Endothelial cell of umbilical vein (primary cell): ENCODE measurements at regions of chr3 and their contacts with region 1.

Region 1: DNA sequence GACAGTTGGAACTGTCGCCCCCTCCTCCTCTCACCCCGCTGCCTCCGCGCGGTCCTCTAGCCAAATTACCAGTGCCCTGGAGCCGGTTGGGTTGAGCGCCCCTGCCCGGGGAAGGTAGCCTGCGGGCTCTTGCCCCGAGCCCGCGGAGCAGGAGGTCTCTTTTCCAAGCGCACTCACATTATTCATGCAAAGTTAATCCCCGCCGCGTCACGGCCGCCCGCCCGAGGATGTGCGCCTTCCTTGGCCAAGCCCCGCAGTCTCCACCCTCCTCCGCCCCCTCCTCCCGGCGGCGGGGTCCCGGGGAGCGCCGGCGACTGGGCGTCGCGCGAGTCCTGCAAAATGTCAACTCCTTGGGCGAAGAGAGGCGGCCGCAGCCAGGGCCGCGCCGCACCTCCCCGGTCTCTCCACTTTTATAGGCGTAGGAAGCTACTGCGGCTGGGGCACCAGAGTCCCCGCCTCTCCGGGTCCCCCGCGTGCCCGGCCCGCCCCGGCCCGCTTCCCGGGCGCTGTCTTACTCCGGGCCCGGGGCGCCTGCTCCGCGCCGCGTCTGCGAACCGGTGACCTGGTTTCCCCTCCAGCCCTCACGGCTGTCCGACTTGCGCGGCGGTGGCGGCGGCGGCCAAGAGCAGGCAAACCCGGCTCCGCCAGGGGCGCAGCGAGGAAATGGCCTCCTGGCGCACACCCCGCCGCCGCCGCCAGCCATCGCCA is at the start of gene THRB:
- DNase-seq: peak; percentile 48
- H3K4me3 ChIP-seq: peak within 1 kb of the TSS; percentile 37 to 67 (median 56)
- H3K27ac ChIP-seq: no peak within 1 kb of the TSS
- H3K4me1 ChIP-seq: peaks cover 12% of the 10 kb centered on the region
- H3K27me3 ChIP-seq: peaks cover 25 to 32% of the 10 kb centered on the region in 2 experiments
- CTCF ChIP-seq: peak in 1 of 2 donors; percentile 26
- POLR2A ChIP-seq: no peak
- total RNA-seq, gene THRB: 0.18 TPM in 1 of 2 replicates, not detected in the other

Region 2: DNA sequence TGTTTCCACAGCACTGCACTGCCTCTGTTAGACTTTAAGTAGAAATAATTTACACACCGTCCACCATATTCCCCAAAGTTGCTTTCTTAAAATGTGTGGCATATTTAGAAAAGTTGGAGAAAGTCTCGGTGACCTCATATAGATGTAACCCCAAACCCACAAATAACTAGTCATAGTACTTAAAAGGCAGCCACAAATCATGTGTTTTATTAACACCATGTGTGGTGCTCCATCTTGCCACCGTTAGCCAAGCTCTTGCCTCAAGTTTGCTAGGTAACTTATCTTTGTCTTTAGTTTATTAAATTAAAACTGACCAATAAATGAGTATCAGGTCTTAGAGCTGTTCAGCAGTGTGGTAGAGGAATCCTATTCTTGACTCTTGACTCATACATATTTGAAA is 1033.7 kb before region 1 on chr3:
- CTCF ChIA-PET with region 1: no interaction called
- POLR2A ChIA-PET with region 1: no interaction called
- dilution Hi-C with region 1: no loop called
- intact Hi-C with region 1: no loop called
- DNase-seq: no peak
- H3K4me3 ChIP-seq: no peak overlapping the region
- H3K27ac ChIP-seq: no peak overlapping the region
- H3K4me1 ChIP-seq: no peaks in the 10 kb centered on the region
- H3K27me3 ChIP-seq: no peaks in the 10 kb centered on the region
- CTCF ChIP-seq: no peak
- POLR2A ChIP-seq: no peak

Region 3: GRCh38 chr3:23999012-23999641 is 495.6 kb before region 1 on chr3:
- CTCF ChIA-PET with region 1: interaction called, 3 read pairs
- POLR2A ChIA-PET with region 1: no interaction called
- dilution Hi-C with region 1: no loop called
- intact Hi-C with region 1: loop called (anchors 1 kb)
- DNase-seq: peak; percentile 79
- H3K4me3 ChIP-seq: no peak overlapping the region
- H3K27ac ChIP-seq: no peak overlapping the region
- H3K4me1 ChIP-seq: peaks cover 3% of the 10 kb centered on the region
- H3K27me3 ChIP-seq: peaks cover 4 to 8% of the 10 kb centered on the region in 2 experiments
- CTCF ChIP-seq: peak; percentile 67 to 87
- POLR2A ChIP-seq: no peak

Region 4: DNA sequence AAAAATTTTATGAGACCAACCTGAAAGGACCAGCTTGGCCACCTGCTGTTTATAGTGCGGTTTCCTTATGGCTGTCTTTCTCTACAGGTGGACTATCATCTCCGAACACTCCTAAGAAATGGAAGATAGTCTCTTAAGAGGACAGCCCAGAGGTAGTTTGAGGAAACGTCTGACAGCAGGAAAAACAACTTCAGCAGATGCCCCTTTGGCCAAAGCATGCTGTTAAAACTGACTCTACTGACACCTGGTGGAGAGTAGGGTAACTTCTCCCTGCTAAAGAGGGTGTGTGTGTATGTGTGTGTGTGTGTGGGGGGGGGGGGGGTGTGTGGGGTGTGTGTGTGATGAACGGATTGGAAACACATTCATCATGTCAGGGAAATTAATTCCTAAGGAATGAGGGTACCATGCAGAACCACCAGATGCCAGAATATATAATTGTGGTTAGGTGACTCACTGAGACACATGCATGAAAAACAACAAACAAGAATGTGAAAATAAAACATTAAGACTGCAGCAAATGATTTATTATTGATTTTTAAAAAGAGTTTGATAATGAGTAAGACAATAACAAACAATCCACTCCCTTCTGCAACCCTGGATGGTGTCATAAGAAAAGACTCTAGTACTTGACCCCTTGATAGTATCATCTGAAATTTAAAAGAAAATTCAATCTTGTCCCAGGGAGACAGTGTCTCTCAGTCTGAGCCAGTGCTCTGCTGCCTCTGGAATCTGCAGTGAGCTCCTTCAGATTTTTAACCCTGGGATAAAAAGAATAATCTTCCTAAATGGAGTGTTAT is 256.6 kb before region 1 on chr3:
- CTCF ChIA-PET with region 1: interaction called, 4 read pairs
- POLR2A ChIA-PET with region 1: no interaction called
- dilution Hi-C with region 1: no loop called
- intact Hi-C with region 1: loop called (anchors 5 kb)
- DNase-seq: peak; percentile 78
- H3K4me3 ChIP-seq: no peak overlapping the region
- H3K27ac ChIP-seq: no peak overlapping the region
- H3K4me1 ChIP-seq: peaks cover 23% of the 10 kb centered on the region
- H3K27me3 ChIP-seq: no peaks in the 10 kb centered on the region
- CTCF ChIP-seq: peak; percentile 55 to 75
- POLR2A ChIP-seq: no peak

Region 5: GRCh38 chr3:24365194-24365612 is 129.6 kb before region 1 on chr3:
- CTCF ChIA-PET with region 1: no interaction called
- POLR2A ChIA-PET with region 1: no interaction called
- dilution Hi-C with region 1: no loop called
- intact Hi-C with region 1: loop called (anchors 1 kb)
- DNase-seq: peak; percentile 97
- H3K4me3 ChIP-seq: no peak overlapping the region
- H3K27ac ChIP-seq: peak overlapping the region; percentile 29
- H3K4me1 ChIP-seq: peaks cover 12% of the 10 kb centered on the region
- H3K27me3 ChIP-seq: no peaks in the 10 kb centered on the region
- CTCF ChIP-seq: peak in 1 of 2 donors; percentile 2
- POLR2A ChIP-seq: peak; percentile 26

Region 6: DNA sequence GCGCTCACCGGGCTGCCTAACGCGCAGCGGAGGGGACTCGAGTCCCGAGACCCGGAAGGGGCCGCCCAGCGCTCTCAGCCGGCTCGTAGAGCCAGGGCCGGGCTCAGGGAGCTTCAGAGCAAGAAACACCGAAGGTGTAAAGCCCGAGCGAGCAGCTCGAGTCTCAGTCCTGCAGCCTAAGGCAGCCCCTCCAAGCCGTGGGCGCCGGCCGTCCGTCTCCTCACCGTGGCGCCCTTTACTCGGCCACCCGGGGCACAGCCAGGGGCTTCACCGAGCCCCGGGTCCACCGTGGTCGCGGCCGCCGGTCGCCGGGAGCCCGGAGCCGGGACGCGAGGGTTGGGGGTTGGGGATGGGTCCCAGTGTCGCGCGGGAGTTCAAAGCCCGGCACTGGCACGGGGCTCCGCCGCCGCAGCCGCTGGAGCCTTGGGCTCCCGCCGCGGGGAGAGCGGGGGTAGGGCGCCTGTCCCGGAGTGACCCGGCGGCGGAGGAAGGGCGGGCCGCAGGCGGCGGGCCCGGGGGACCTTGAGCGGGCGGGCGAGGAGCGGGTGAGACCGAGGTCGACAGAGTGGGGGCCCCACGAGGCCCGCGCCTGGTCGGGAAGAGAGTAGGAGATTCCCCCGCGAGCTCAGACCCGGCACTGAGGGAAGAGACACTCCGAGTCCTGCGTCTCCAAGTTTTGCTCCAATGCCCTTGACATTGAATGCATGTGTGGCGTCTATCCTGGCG is 26.8 kb after region 1 on chr3:
- CTCF ChIA-PET with region 1: interaction called, 12 read pairs
- POLR2A ChIA-PET with region 1: no interaction called
- dilution Hi-C with region 1: no loop called
- intact Hi-C with region 1: loop called (anchors 2 kb)
- DNase-seq: peak; percentile 37
- H3K4me3 ChIP-seq: peak overlapping the region; percentile 43 to 57 (median 56)
- H3K27ac ChIP-seq: no peak overlapping the region
- H3K4me1 ChIP-seq: peaks cover 9% of the 10 kb centered on the region
- H3K27me3 ChIP-seq: peaks cover 6 to 21% of the 10 kb centered on the region in 2 experiments
- CTCF ChIP-seq: no peak
- POLR2A ChIP-seq: no peak

Region 7: GRCh38 chr3:24680214-24680967 is 185.6 kb after region 1 on chr3:
- CTCF ChIA-PET with region 1: interaction called, 3 read pairs
- POLR2A ChIA-PET with region 1: no interaction called
- dilution Hi-C with region 1: no loop called
- intact Hi-C with region 1: loop called (anchors 5 kb)
- DNase-seq: peak; percentile 57
- H3K4me3 ChIP-seq: no peak overlapping the region
- H3K27ac ChIP-seq: no peak overlapping the region
- H3K4me1 ChIP-seq: no peaks in the 10 kb centered on the region
- H3K27me3 ChIP-seq: peaks cover 0 to 2% of the 10 kb centered on the region in 2 experiments
- CTCF ChIP-seq: peak; percentile 88 to 92
- POLR2A ChIP-seq: no peak

Region 8: DNA sequence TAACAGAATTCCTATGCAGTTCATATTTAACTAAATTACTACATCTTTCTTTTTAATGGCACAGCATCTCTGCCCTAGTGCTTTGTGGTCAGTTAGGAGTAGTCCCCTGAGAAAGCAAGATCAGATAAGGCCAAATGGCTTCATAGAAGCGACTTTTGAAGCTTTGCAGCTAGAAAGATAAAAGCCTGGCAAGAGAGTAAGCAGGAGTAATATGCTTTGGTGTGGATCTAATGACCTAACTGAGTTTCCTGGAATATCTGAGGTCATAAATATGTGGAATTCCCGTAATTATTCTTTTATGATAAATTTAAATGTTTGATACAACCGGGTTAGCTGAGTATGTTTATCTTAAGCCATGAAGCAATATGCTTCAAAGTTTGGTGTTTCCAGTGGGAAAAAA is 1752.9 kb after region 1 on chr3:
- CTCF ChIA-PET with region 1: no interaction called
- POLR2A ChIA-PET with region 1: no interaction called
- dilution Hi-C with region 1: no loop called
- intact Hi-C with region 1: no loop called
- DNase-seq: no peak
- H3K4me3 ChIP-seq: no peak overlapping the region
- H3K27ac ChIP-seq: no peak overlapping the region
- H3K4me1 ChIP-seq: no peaks in the 10 kb centered on the region
- H3K27me3 ChIP-seq: no peaks in the 10 kb centered on the region
- CTCF ChIP-seq: no peak
- POLR2A ChIP-seq: no peak